IMR-90 (cell line): ENCODE measurements at regions of chr2 and their contacts with region 1.

Region 1: GRCh38 chr2:43943809-43944452 is 51.9 kb downstream of the LRPPRC start:
- DNase-seq: peak; percentile 8
- ATAC-seq: no peak
- H3K4me3 ChIP-seq: no peak overlapping the region
- H3K27ac ChIP-seq: no peak overlapping the region
- H3K4me1 ChIP-seq: 0 out of 2 replicates have a peak, but pooled peaks cover 2% of the 10 kb centered on the region
- H3K27me3 ChIP-seq: no peaks in the 10 kb centered on the region
- CTCF ChIP-seq: no peak
- POLR2A ChIP-seq: no peak
- RAD21 ChIP-seq: no peak

Region 2: GRCh38 chr2:43611987-43612894 is 331.7 kb before region 1 on chr2:
- CTCF ChIA-PET with region 1: no interaction called
- POLR2A ChIA-PET with region 1: no interaction called
- dilution Hi-C with region 1: no loop called
- in situ Hi-C with region 1: no loop called
- intact Hi-C with region 1: loop called (anchors 5 kb)
- DNase-seq: peak; percentile 76
- ATAC-seq: peak; percentile 96
- H3K4me3 ChIP-seq: no peak overlapping the region
- H3K27ac ChIP-seq: no peak overlapping the region
- H3K4me1 ChIP-seq: peaks cover 2% of the 10 kb centered on the region; the same call in 1 of the 2 replicates
- H3K27me3 ChIP-seq: peaks cover 3% of the 10 kb centered on the region; the same call in 1 of the 2 replicates
- CTCF ChIP-seq: peak; percentile 84
- POLR2A ChIP-seq: no peak
- RAD21 ChIP-seq: peak; percentile 78

Region 3: DNA sequence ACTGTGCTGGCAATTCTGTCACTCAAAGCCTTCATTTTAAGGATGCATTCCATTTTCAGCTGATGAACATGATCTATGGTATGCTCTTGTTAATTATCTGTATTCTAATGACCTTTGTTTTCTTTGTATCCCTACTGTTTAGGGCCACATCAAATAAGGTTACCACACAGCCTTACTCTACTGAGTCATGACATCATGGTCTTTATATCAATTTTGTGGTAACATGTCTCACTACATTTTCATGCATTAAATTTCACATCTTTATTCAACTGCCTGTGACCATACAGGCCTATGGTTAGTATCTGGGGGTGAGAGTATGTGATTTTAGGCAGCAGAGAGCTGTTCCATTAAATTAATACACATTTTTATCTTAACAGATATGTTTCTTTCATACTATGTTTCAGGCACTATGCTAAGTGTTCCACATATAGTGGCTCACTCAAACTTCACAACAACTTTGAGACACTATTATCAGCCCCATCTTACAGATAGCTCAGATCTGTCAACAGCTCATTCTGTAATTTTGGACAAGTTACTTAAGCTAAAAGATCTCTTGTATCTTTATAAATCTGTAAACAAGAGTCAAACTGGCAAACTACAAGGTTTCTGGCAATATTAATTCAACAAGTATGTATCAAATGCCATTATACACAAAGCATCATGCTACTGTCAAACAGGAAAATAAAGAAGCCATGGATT is 33.9 kb after region 1 on chr2:
- CTCF ChIA-PET with region 1: no interaction called
- POLR2A ChIA-PET with region 1: interaction called, 3 read pairs
- dilution Hi-C with region 1: no loop called
- in situ Hi-C with region 1: no loop called
- intact Hi-C with region 1: loop called (anchors 5 kb)
- DNase-seq: peak; percentile 3
- ATAC-seq: no peak; the same call in 1 of the 2 replicates
- H3K4me3 ChIP-seq: no peak overlapping the region
- H3K27ac ChIP-seq: no peak overlapping the region
- H3K4me1 ChIP-seq: no peaks in the 10 kb centered on the region
- H3K27me3 ChIP-seq: no peaks in the 10 kb centered on the region
- CTCF ChIP-seq: no peak
- POLR2A ChIP-seq: no peak
- RAD21 ChIP-seq: no peak

Region 4: DNA sequence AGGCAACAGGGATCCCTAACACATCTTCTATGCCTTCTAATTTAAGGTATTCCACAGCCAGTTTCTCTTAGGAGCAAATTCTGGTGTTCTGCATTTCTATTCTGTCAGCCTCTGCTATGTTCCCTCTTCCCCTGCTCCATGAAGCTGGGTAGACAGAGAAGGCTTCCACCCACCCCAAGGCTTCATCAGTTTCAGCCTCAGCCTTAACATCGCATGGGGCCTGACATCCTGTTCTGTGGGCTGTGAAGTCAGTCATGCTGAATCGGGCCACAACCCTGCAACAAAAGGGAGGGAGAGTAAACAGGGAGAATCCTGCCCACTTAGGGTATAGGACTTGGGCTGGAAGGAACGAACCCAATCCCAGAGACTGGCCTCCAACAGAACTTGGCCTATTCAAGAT is 154.1 kb after region 1 on chr2:
- CTCF ChIA-PET with region 1: no interaction called
- POLR2A ChIA-PET with region 1: no interaction called
- dilution Hi-C with region 1: no loop called
- in situ Hi-C with region 1: no loop called
- intact Hi-C with region 1: no loop called
- DNase-seq: no peak
- ATAC-seq: no peak
- H3K4me3 ChIP-seq: no peak overlapping the region
- H3K27ac ChIP-seq: no peak overlapping the region
- H3K4me1 ChIP-seq: peaks cover 5% of the 10 kb centered on the region; the same call in 1 of the 2 replicates
- H3K27me3 ChIP-seq: no peaks in the 10 kb centered on the region
- CTCF ChIP-seq: no peak
- POLR2A ChIP-seq: no peak
- RAD21 ChIP-seq: no peak